ENCODE measurements at regions of chr10 and their contacts with region 1.

Region 1: DNA sequence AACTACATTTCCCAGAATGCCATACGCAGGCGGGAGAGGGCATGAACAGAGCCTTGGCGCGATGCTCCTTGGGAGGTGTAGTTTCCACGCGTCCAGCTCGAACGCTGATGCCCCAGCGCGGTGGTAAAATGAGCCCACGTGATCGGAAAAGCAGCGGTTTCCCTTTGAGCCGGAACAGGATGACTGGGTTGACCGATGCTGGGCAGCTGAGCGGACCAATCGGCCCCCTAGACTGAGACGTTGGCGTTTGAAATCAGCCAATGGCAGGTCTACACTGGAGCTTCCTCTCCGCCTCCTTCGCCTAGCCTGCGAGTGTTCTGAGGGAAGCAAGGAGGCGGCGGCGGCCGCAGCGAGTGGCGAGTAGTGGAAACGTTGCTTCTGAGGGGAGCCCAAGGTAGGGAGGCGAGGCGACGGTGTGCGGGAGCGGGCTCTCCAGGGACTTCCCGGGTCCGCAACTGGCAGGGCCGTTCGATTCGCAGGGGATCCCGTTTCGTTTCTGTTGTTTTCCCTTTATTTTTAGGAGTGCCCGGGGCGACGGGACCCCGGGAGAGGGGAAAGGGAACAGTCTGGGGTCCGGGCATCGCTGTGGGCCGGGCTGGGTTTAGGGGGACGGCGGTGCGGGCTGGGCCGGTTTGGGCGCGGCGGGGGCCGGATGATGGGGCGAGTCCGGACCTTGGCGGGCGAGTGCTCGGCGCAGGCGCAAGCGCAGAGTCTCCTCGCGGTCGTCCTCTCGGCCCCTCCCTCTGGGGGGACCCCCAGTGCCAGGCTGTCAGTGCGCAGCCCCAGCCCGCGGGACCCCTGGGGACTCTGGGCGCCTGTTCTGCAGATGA is at the start of gene BUB3:
- DNase-seq: peak; percentile 98 to 99
- ATAC-seq: peak; percentile 98
- H3K4me3 ChIP-seq: peak within 1 kb of the TSS; percentile 80 to 88
- H3K27ac ChIP-seq: peak within 1 kb of the TSS in 1 of 2 donors; percentile 68
- H3K4me1 ChIP-seq: no peaks in the 10 kb centered on the region
- H3K27me3 ChIP-seq: no peaks in the 10 kb centered on the region
- total RNA-seq, gene BUB3: 42.9 to 61.4 TPM

Region 2: DNA sequence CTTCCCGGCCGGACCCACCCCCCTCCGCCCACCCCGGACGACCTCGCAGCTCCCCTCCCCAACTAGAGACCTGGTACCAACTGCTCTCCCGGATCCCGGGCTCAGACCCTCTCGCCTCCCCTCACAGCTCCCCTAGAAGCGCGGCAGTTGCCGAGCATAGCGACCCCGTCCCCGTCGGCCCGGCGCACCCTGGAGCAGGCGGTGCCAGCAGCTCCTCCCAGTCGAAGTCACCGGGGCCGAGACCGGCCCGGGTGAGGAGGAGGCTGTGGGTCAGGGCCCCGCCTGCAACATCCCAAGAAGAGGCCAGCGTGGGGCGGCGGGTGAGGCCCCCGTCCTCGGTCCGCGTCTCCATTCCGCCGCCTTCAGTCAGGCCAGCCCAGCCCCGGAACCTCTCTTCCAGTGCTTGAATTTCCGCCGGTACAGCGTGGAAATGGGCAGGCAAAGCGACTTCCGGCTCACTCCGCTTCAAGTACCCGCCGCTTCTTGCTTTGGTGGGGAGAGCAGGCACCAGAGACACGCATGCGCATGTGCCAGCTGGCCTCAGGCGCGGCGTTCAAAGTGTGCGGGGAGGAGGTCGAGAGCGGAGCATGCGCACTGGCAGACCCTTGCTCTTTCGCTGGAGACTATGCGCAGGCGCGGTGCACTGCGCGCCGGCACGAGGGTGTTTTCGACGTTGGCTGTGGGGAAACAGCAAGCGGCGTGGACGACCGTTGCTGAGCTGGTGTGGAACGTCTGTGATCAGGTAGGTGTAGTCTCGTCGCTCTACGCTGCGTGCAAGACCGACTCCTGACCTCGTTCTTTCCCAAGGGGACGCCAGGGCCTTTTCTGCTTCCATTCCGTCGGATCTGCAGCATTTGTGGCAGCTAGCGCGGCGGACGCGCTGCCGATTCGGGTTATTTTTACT is 200.2 kb before region 1 on chr10 and contains the start of gene C10orf88:
- intact Hi-C with region 1: loop called in 1 of 2 experiments (anchors 5 kb)
- DNase-seq: peak; percentile 99
- ATAC-seq: peak; percentile 99
- H3K4me3 ChIP-seq: peak within 1 kb of the TSS; percentile 73 to 77
- H3K27ac ChIP-seq: peak within 1 kb of the TSS in 1 of 2 donors; percentile 9
- H3K4me1 ChIP-seq: no peaks in the 10 kb centered on the region
- H3K27me3 ChIP-seq: no peaks in the 10 kb centered on the region
- total RNA-seq, gene C10orf88: 9.7 to 11.7 TPM

Region 3: GRCh38 chr10:122980209-122981065 is 173.9 kb before region 1 on chr10 and contains the start of gene PSTK:
- intact Hi-C with region 1: loop called in 1 of 2 experiments (anchors 10 kb)
- DNase-seq: peak; percentile 96 to 98
- ATAC-seq: peak; percentile 99
- H3K4me3 ChIP-seq: peak within 1 kb of the TSS; percentile 62 to 84
- H3K27ac ChIP-seq: peak within 1 kb of the TSS in 1 of 2 donors; percentile 66
- H3K4me1 ChIP-seq: no peaks in the 10 kb centered on the region
- H3K27me3 ChIP-seq: no peaks in the 10 kb centered on the region
- total RNA-seq, gene PSTK: 1.6 to 2.0 TPM

Region 4: DNA sequence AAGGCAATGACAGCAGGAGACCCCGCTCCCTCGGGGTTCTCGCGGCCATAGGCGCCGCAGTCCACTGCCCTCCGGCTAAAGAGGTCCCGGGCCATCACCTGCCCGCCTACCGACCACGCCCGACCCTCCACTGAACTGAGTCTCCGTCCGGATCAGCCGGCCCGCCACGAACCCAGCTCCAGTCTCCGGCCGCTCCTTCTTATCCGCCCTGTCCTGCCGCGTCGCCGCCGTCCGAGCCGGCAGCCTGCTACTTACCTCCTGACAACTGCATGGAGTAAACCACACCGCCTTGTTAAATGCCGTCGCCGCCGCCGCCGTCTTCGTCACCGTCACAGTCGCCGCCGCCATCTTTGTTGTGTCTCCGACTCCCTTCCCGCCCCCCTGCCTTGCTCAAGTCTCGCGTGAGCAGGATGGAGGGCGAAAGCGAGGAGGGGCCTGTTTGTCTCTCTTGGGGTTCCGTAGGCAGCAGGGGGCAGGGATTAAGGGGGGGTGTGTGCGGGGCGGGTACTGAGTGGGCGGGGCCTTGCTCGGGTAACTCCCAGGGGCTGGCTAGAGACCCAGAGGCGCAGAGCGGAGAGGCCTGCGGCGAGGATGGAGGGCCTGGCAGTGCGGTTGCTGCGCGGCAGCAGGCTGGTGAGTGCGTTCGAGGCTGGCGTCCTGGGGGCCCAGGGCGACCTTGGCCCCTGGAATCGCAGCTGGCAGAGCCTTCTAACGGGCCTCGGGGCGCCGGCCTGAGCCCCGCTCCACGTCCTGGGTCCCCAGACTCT is 145.7 kb before region 1 on chr10 and contains the starts of genes ACADSB and IKZF5:
- intact Hi-C with region 1: loop called in 1 of 2 experiments (anchors 10 kb)
- DNase-seq: peak; percentile 98
- ATAC-seq: peak; percentile 100
- H3K4me3 ChIP-seq: peak within 1 kb of the TSS; percentile 70 to 94
- H3K27ac ChIP-seq: peak within 1 kb of the TSS in 1 of 2 donors; percentile 83
- H3K4me1 ChIP-seq: peaks cover 0 to 1% of the 10 kb centered on the region in 2 donors
- H3K27me3 ChIP-seq: no peaks in the 10 kb centered on the region
- total RNA-seq, gene ACADSB: 17.9 to 25.5 TPM
- total RNA-seq, gene IKZF5: 17.8 to 21.5 TPM

Region 5: DNA sequence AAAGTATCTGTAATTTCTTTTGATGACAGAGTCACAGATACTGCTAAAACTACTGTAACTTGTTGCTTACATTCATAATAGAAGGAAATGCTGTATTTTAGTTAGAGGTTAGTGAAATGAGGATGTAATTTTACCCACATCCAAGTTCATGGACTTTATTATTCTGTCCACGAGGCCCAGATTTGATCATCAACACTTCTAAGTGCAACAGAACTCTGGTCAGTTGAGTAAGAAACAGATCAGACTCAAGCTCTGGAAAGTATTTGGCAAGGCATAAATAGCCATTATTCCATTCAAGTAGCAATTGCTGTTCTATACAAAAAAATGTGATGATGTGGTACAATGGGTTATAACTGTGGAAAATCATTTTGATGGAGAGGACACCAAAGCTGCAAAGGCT is 123.2 kb before region 1 on chr10:
- intact Hi-C with region 1: no loop called
- DNase-seq: no peak
- ATAC-seq: no peak
- H3K4me3 ChIP-seq: no peak overlapping the region
- H3K27ac ChIP-seq: no peak overlapping the region
- H3K4me1 ChIP-seq: no peaks in the 10 kb centered on the region
- H3K27me3 ChIP-seq: no peaks in the 10 kb centered on the region

Region 6: DNA sequence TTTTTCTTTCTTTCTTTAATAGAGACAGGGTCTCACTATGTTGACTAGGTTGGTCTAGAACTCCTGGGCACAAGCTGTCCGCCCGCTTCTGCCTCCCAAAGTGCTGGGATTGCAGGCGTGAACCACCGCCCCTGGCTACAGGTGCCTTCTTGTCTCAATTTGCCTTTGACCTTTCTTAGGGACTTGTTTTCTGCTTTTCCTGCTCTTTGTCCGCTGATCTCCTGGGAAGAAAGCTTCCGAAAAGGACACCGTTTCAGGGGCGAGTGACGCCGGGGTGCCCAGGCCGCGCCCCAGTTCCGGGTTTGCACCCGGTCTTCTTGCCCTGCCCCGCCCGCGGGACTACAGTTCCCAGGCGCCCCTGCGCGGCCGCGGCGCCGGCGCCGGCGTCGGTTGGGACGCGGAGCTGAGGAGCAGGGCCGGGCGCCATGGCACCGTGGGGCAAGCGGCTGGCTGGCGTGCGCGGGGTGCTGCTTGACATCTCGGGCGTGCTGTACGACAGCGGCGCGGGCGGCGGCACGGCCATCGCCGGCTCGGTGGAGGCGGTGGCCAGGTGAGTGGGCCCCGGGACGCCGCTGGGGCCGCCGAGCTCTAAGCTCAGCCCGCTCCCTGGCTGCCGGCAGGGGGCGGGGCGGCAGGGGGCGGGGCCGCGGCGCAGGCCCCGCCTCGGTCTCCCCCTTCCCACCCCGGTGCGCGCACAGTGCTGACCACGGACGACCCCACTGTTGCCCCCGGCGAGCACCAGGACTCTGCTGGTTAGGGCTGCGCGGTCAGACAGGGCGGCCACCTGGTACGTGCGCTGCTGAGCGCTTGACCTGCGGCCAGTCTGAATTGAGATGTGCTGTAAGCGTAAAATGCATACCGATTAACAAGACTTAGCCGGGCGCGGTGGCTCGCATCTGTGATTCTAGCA is 1307.4 kb after region 1 on chr10 and contains the start of gene LHPP:
- intact Hi-C with region 1: loop called in 1 of 2 experiments (anchors 10 kb)
- DNase-seq: peak; percentile 93 to 95
- ATAC-seq: peak; percentile 96
- H3K4me3 ChIP-seq: peak within 1 kb of the TSS; percentile 81 to 85
- H3K27ac ChIP-seq: peak within 1 kb of the TSS in 1 of 2 donors; percentile 62
- H3K4me1 ChIP-seq: no peaks in the 10 kb centered on the region
- H3K27me3 ChIP-seq: no peaks in the 10 kb centered on the region
- total RNA-seq, gene LHPP: 11.5 to 20.2 TPM

Measured in aorta (tissue), 5 donors.